Activated CD4-positive, alpha-beta T cell treated with anti-CD3 and anti-CD28 coated beads for 36 hours (primary cell): ENCODE measurements at regions of chr1 and their contacts with region 1.

Region 1: DNA sequence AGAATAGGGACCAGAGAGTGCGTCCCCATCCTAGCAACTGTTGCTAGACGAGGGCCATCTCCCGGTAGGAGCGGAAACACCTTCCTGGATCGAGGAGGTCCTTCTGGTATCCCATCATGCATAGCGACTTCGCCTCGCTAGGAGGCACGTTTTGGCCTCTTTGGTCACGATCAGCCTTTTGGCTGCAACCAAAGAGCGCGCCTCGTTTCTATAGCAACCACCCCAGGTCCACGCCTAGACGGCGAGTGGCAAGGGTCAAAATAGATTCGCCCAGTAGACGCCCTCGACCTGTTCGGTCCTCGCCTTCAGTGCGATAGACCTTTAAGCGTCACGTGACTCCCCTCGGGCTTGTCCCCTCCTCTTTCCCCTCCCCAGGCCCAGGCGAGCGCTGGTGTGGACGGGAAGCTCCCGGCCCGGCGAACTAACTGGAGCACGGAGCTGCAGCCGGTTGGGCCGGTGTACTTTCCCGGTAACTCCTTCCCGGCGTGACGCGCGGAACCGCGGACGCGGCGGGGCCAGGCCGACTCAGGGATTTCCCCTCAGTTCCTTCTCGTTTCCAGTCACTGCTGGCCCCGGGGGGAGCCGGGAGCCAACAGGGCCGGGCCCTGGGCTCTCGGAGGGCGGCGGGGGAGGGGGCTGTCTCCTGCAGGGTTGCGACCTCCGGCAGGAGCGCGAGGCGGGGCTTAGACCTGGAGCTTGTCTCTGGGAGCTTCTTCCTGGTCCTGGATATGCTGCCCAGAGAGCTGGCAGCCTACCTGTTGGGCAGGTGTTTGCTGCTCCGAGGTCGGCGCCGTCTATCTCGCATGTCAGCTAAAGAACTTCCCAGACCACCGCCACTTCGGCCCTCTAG is at the start of gene DNAJC16:
- DNase-seq: peak; percentile 98
- ATAC-seq: peak; percentile 57
- H3K4me3 Mint-ChIP-seq: peak within 1 kb of the TSS; percentile 84
- H3K27ac Mint-ChIP-seq: peak within 1 kb of the TSS; percentile 88
- H3K4me1 Mint-ChIP-seq: peaks cover 53% of the 10 kb centered on the region
- H3K27me3 Mint-ChIP-seq: no peaks in the 10 kb centered on the region
- total RNA-seq, gene DNAJC16: 10.9 to 14.1 TPM

Region 2: DNA sequence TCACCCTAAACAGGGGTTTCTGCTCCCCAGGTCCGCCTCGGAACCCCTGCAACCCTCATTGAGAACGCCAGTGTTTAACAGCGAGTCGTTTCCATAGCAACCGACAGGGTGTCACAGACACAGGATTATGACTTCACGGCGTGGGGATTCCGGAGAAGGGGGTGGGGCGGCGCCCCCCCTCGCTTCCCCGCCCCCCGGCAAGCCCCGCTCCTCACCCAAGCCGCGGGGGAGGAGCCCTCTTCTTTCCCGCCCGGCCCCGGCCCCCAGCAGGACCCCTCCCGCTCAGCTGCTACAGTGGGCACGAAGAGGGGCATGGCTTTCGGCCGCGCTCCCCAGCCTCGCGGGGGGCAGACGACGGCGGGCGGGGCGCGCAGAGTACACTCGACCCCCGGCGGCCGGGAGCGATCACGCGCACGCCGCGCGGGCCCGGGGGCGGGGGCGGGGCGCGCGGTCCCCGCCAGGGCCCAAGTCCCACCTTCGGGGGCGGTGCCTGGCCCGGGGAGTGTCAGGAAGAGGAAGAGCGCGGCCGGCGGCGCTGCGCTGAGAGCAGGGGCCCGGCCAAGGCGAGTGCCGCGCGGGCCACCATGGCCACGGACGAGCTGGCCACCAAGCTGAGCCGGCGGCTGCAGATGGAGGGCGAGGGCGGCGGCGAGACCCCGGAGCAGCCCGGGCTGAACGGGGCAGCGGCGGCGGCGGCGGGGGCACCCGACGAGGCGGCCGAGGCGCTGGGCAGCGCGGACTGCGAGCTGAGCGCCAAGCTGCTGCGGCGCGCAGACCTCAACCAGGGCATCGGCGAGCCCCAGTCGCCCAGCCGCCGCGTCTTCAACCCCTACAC is 117.1 kb before region 1 on chr1 and contains the start of gene EFHD2:
- CTCF ChIA-PET with region 1: no interaction called
- POLR2A ChIA-PET with region 1: no interaction called
- intact Hi-C with region 1: loop called (anchors 1 to 2 kb)
- DNase-seq: peak; percentile 90
- ATAC-seq: peak; percentile 86
- H3K4me3 Mint-ChIP-seq: peak within 1 kb of the TSS; percentile 87
- H3K27ac Mint-ChIP-seq: peak within 1 kb of the TSS; percentile 81
- H3K4me1 Mint-ChIP-seq: peaks cover 28% of the 10 kb centered on the region
- H3K27me3 Mint-ChIP-seq: peaks cover 5% of the 10 kb centered on the region
- total RNA-seq, gene EFHD2: 43.1 to 48.6 TPM

Region 3: GRCh38 chr1:15603050-15603965 is 76.6 kb after region 1 on chr1:
- CTCF ChIA-PET with region 1: no interaction called
- POLR2A ChIA-PET with region 1: no interaction called
- intact Hi-C with region 1: loop called in 1 of 2 experiments (anchors 1 kb)
- DNase-seq: peak; percentile 96
- ATAC-seq: peak; percentile 99
- H3K4me3 Mint-ChIP-seq: peak overlapping the region; percentile 55
- H3K27ac Mint-ChIP-seq: peak overlapping the region; percentile 45
- H3K4me1 Mint-ChIP-seq: peaks cover 11% of the 10 kb centered on the region
- H3K27me3 Mint-ChIP-seq: no peaks in the 10 kb centered on the region

Region 4: DNA sequence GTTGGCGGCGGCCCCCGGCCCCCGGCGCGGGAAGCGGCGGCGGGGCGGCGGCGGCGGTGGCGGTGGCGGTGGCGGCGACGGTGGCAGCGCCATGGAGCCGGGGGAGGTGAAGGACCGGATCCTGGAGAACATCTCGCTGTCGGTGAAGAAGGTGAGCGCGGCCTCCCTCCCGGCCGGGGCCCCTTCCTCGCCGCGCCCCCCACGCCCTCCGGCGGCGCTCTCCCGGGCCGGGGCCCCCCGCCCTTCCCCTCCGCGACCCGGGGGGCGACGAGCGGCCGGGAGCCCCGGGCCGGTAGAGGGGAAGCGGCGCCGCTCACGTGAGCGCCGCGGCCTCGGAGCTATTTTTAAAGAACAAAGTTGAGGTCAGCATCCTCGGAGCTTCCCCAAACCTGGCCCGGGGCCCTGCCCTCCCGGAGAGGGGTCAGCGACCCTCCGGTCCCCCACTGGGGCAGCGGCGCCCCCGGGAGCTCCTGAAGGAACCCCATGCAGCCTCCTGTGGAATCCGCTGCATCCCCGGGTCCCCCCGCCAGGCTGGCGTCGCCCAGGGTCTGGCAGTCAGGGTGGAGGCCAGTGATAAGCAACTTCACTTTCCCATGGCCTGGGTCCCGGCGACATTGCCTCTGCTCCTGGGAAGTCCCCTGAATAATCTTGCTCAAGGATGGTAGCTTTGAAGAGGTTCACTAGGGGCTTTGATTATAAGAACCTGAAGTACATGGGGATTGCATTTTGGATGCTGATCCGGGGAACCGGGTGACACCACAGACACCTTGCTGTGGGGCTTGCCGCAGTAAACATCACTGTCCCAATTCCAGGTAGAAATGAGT is 158.0 kb after region 1 on chr1:
- CTCF ChIA-PET with region 1: no interaction called
- POLR2A ChIA-PET with region 1: no interaction called
- intact Hi-C with region 1: loop called (anchors 1 to 5 kb)
- DNase-seq: peak; percentile 60
- ATAC-seq: peak; percentile 37
- H3K4me3 Mint-ChIP-seq: peak overlapping the region; percentile 86
- H3K27ac Mint-ChIP-seq: peak overlapping the region; percentile 92
- H3K4me1 Mint-ChIP-seq: peaks cover 53% of the 10 kb centered on the region
- H3K27me3 Mint-ChIP-seq: no peaks in the 10 kb centered on the region

Region 5: GRCh38 chr1:15866721-15867201 is 340.0 kb after region 1 on chr1:
- CTCF ChIA-PET with region 1: no interaction called
- POLR2A ChIA-PET with region 1: no interaction called
- intact Hi-C with region 1: no loop called
- DNase-seq: no peak
- ATAC-seq: no peak
- H3K4me3 Mint-ChIP-seq: no peak overlapping the region
- H3K27ac Mint-ChIP-seq: no peak overlapping the region
- H3K4me1 Mint-ChIP-seq: peaks cover 47% of the 10 kb centered on the region
- H3K27me3 Mint-ChIP-seq: no peaks in the 10 kb centered on the region

Region 6: DNA sequence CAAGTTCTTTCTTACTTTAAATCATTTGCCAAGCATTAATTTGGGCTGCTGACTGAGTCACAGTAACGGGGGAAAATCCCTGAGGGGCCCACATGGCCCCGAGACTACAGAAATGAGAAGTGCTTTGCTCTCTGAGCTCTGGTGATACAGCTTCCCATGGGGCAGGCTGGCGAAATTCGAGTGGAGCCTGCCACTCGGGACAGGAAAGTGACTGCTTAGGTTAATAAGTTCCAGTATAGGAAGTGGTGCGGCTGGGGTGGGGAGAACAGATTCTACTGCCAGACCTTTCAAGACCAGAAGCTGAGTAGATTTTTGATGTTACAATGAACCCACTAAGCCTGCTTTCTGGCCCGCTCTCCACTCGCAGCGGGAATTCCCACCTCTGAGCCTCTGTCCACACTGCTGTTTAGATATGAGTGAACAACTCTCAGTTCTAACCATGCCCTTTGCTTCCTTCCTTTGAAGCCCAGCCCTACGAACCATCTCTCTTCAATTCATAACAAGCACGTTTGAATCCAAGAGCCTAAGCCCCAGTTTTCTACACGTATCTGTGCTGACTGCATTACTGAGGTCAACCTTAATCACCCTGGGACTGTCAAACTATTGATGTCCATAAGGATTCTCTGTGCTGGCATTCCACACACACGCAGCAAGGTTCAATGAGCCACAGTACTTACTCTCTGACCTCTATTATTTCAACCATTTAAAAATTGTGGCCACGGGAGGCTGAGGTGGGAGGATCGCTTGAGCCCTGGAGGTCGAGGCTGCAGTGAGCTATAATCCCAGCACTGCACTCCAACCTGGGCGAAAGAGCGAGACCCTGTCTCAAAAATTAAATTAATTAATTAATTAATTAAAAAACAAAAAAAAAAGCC is 439.6 kb after region 1 on chr1:
- CTCF ChIA-PET with region 1: no interaction called
- POLR2A ChIA-PET with region 1: no interaction called
- intact Hi-C with region 1: loop called in 1 of 2 experiments (anchors 1 kb)
- DNase-seq: peak; percentile 93
- ATAC-seq: peak; percentile 79
- H3K4me3 Mint-ChIP-seq: peak overlapping the region; percentile 54
- H3K27ac Mint-ChIP-seq: peak overlapping the region; percentile 98
- H3K4me1 Mint-ChIP-seq: peaks cover 83% of the 10 kb centered on the region
- H3K27me3 Mint-ChIP-seq: no peaks in the 10 kb centered on the region

Region 7: GRCh38 chr1:16351994-16352841 is 825.5 kb after region 1 on chr1 and contains the start of gene FBXO42:
- CTCF ChIA-PET with region 1: no interaction called
- POLR2A ChIA-PET with region 1: no interaction called
- intact Hi-C with region 1: loop called in 1 of 2 experiments (anchors 1 kb)
- DNase-seq: peak; percentile 95
- ATAC-seq: peak; percentile 92
- H3K4me3 Mint-ChIP-seq: peak within 1 kb of the TSS; percentile 96
- H3K27ac Mint-ChIP-seq: peak within 1 kb of the TSS; percentile 96
- H3K4me1 Mint-ChIP-seq: peaks cover 31% of the 10 kb centered on the region
- H3K27me3 Mint-ChIP-seq: no peaks in the 10 kb centered on the region
- total RNA-seq, gene FBXO42: 14.3 to 18.1 TPM

Region 8: DNA sequence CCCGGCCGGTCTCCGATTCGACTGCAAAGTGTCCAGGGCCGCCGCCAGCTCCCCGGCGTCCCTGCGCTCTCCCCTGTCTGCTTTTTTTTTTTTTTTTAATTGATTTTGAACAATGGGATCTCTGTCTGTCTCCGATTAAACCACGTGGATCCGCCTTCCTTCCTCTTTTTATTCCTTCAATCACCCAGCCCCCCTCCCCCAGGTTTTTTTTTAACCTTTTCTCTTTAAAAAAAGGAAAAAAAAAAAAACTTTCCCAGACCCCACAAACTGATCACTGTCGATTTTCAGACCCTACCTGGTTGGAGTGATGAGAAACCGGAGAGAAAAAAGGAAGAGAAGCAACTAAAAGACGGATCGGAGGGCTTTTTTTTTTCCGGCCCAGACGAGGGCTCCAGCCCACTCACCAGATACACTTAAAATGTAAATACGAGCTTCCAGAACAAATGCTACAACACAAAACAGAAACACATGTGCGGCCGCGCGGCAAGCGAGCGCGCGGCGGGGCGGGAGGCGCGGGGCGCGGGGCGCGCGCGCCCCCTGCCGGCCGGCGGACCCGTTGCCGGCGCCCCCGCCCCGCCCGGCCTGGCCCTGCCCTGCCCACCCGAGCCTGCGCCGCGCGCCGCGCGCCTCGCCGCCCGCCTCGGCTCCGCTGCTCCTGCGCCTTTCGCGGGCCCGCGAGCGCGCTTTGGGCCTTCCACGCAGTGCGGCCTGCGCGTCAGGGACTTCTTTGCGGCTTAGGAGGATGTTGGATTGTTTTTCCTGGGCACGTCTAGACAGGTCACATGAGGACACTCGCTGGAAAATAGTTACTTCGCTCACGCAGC is 1912.7 kb after region 1 on chr1 and contains the start of gene RCC2:
- CTCF ChIA-PET with region 1: no interaction called
- POLR2A ChIA-PET with region 1: no interaction called
- intact Hi-C with region 1: loop called in 1 of 2 experiments (anchors 5 kb)
- DNase-seq: peak; percentile 86
- ATAC-seq: peak; percentile 69
- H3K4me3 Mint-ChIP-seq: peak within 1 kb of the TSS; percentile 96
- H3K27ac Mint-ChIP-seq: peak within 1 kb of the TSS; percentile 96
- H3K4me1 Mint-ChIP-seq: peaks cover 45% of the 10 kb centered on the region
- H3K27me3 Mint-ChIP-seq: no peaks in the 10 kb centered on the region
- total RNA-seq, gene RCC2: 107 to 120 TPM